ENCODE measurements at regions of chr17 and their contacts with region 1.

Region 1: GRCh38 chr17:45060797-45061605 is at the start of gene NMT1:
- DNase-seq: peak; percentile 99
- ATAC-seq: peak; percentile 90
- H3K4me3 ChIP-seq: peak within 1 kb of the TSS; percentile 84
- H3K27ac ChIP-seq: peak within 1 kb of the TSS; percentile 98
- H3K4me1 ChIP-seq: peaks cover 10% of the 10 kb centered on the region
- H3K27me3 ChIP-seq: no peaks in the 10 kb centered on the region
- CTCF ChIP-seq: no peak
- EP300 ChIP-seq: no peak
- POLR2A ChIP-seq: peak; percentile 98
- RAD21 ChIP-seq: no peak
- polyA plus RNA-seq, gene NMT1: 282 to 342 TPM

Region 2: DNA sequence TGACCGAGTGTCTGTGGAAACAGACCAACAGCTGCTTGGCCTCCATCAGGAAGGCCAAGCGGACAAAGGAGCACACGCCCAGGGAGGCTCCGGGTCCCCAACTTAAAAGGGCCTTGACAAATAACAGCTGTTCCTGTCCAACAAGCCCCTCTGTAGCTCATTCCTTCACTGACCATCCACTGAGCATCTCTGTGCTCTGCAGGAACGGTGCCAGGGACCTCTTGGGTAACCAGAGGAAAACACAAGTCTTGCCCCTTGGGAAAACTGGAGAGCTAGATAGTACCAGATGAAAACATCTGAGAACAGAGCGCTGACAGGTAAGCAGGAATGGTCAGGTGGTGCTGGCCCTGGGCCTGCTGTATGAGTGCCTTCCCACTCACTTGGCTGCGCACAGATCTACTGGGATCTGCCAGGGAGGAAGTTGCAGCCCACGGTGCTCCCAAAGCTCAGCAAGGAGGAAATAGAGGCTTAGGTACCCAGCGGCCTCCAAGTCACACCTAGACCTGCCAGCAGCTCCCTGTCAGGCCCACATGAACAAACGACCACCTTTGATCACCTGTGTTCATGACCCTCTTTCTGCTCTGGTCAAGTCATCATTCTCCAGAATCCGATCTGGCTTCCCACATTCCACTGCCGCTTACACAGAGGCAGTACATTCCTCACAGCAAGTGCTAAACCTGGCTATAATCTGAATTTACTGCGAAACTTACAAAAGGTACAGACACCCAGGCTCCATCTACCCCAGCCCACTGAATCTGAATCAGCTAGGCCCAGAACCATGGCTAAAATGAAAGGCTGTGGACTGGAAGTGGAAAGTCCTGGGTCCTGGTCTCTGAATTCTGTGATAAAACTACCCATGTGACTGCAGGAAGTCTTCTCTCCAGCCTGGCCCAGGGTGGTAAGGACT is 22.0 kb before region 1 on chr17:
- CTCF ChIA-PET with region 1: interaction called, 3 read pairs
- POLR2A ChIA-PET with region 1: interaction called, 12 read pairs
- RAD21 ChIA-PET with region 1: interaction called, 9 read pairs
- SMC1A ChIA-PET with region 1: interaction called, 9 read pairs
- in situ Hi-C with region 1: no loop called
- intact Hi-C with region 1: no loop called
- DNase-seq: no peak
- ATAC-seq: no peak
- H3K4me3 ChIP-seq: no peak overlapping the region
- H3K27ac ChIP-seq: peak overlapping the region; percentile 69
- H3K4me1 ChIP-seq: peaks cover 6% of the 10 kb centered on the region
- H3K27me3 ChIP-seq: no peaks in the 10 kb centered on the region
- CTCF ChIP-seq: no peak
- EP300 ChIP-seq: no peak
- POLR2A ChIP-seq: no peak
- RAD21 ChIP-seq: no peak

Region 3: DNA sequence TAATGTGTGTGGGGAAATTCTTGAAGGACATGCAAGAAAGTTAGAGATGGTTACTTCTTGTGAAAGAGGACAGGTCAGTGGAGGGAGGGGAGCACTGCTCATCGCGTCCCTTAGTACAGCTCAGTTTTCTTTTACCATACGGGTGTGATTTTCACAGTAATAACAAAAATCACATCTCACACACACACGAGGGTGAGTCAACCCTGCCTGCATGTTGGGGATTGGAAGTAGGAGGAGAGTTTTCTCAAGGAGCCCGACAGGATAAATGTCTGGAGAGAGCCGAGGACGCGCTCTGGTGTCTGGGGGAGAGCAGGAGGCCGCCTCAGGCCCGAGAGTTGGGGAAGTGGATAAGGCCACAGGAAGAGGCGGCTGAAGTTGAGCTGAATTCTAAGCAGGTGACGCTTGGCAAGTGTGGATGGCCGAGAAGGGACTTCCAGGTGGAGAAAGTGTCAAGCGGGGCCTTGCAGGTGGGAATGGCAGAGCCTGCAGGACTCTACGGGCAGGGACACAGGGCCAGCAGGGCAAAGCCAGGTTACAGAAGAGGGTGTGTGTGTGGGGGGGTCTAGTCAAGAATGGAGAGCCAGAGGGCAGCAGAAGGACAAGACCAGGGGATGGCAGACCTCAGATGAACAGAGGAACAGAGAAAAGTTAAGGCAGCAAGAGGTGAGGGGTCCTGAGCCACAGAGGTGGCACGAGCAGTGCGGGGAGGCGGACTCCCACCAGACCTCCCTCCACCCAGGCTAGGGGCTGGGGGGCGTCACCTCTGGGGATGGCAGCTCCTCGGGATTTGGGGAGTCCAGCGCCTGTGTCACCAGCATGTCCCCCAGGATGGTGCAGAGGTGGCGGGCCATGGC is 55.1 kb after region 1 on chr17:
- CTCF ChIA-PET with region 1: no interaction called
- POLR2A ChIA-PET with region 1: no interaction called
- RAD21 ChIA-PET with region 1: no interaction called
- SMC1A ChIA-PET with region 1: no interaction called
- in situ Hi-C with region 1: no loop called
- intact Hi-C with region 1: no loop called
- DNase-seq: no peak
- ATAC-seq: no peak
- H3K4me3 ChIP-seq: no peak overlapping the region
- H3K27ac ChIP-seq: no peak overlapping the region
- H3K4me1 ChIP-seq: peaks cover 11% of the 10 kb centered on the region; the same call in 1 of the 2 replicates
- H3K27me3 ChIP-seq: no peaks in the 10 kb centered on the region
- CTCF ChIP-seq: no peak
- EP300 ChIP-seq: no peak
- POLR2A ChIP-seq: no peak
- RAD21 ChIP-seq: no peak